ENCODE measurements at regions of chr16 and their contacts with region 1.

Region 1: GRCh38 chr16:8621572-8622314 is at the start of gene METTL22:
- DNase-seq: peak; percentile 90 to 96 (median 92)
- ATAC-seq: peak; percentile 97 to 99 (median 98)
- H3K4me3 ChIP-seq: peak within 1 kb of the TSS; percentile 81 to 100 (median 96)
- H3K27ac ChIP-seq: peak within 1 kb of the TSS; percentile 62 to 92 (median 84)
- H3K4me1 ChIP-seq: peaks cover 0 to 22% (median 16%) of the 10 kb centered on the region in 12 donors
- H3K27me3 ChIP-seq: no peaks in the 10 kb centered on the region
- CTCF ChIP-seq: peak in 2 of 12 donors; percentile 9 to 10
- POLR2A ChIP-seq: peak in 1 of 2 donors; percentile 85
- total RNA-seq, gene METTL22: 15.3 to 80.3 (median 33.0) TPM

Region 2: DNA sequence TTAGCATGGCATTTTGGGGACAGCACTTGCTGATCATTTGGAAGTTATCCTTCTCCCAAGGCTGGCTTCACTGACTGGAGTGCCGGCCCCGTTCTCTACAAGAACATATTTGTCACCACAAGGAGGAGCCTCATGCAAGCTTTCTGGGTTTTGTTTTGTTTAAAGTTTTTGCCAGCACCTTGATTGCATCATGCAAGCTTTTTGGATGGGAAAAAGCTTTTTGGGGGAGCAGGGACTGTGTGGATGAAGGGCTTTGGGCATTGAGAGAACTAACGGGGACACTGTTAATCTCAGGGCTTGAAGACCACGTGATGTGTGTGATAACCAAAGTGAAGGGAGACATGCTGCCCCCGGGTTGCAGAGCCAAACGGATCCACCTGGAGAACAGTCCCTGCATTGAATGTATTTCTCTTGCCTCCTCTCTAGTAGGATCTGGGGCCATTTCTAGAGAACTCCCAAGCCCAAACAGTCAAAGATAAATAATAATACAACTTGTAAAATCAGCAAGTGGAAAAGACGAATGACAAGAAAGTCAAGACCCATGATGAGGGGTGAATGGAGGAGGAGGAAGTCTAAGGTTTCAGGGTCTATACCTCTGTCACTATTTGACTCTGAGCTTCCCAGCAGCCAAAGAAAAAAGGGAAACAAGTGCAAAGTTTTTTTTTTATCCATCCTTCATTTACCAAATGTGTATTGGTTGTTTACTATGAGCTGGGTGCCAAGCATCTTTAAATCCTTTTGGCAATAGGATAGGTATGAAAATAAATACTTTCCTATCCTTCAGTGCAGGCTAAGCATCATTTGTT is 48.6 kb before region 1 on chr16:
- intact Hi-C with region 1: loop called in 2 of 10 experiments (anchors 5 kb)
- DNase-seq: no peak
- ATAC-seq: no peak
- H3K4me3 ChIP-seq: no peak overlapping the region
- H3K27ac ChIP-seq: no peak overlapping the region
- H3K4me1 ChIP-seq: peaks cover 0 to 8% (median 0%) of the 10 kb centered on the region in 12 donors
- H3K27me3 ChIP-seq: peaks cover 0 to 20% (median 8%) of the 10 kb centered on the region in 9 donors
- CTCF ChIP-seq: peak in 10 of 12 donors; percentile 7 to 48 (median 34)
- POLR2A ChIP-seq: no peak

Region 3: DNA sequence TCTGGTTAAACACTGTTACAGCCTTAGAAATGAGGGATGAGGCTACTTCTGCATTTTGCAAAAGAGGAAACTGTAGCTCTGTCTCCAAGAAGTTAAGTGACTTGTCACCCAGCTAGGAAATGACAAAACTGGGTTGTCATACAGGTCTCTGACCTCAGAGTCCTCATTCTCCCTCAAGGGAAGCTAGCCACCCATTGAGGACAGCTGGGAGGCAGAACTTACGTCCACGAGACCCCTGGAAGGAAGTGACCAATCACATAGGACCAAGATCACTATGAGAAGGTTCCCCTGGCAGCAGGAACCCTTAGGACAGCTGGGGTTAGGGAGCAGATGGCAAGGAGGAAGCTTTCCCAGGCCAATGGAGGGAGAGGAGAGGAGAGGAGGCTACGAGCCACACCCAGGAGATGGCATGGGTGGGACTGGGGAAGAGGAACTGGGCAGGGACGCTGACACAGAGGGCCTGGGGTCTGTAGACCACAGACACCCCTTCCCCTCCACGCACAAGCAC is 11.0 kb after region 1 on chr16:
- intact Hi-C with region 1: loop called in 1 of 10 experiments (anchors 1 kb)
- DNase-seq: peak in 4 of 5 donors; percentile 30 to 63 (median 42)
- ATAC-seq: peak; percentile 51 to 89 (median 74)
- H3K4me3 ChIP-seq: no peak overlapping the region
- H3K27ac ChIP-seq: peak overlapping the region in 7 of 12 donors; percentile 13 to 94 (median 59)
- H3K4me1 ChIP-seq: peaks cover 0 to 22% (median 0%) of the 10 kb centered on the region in 12 donors
- H3K27me3 ChIP-seq: no peaks in the 10 kb centered on the region
- CTCF ChIP-seq: no peak
- POLR2A ChIP-seq: no peak

Region 4: DNA sequence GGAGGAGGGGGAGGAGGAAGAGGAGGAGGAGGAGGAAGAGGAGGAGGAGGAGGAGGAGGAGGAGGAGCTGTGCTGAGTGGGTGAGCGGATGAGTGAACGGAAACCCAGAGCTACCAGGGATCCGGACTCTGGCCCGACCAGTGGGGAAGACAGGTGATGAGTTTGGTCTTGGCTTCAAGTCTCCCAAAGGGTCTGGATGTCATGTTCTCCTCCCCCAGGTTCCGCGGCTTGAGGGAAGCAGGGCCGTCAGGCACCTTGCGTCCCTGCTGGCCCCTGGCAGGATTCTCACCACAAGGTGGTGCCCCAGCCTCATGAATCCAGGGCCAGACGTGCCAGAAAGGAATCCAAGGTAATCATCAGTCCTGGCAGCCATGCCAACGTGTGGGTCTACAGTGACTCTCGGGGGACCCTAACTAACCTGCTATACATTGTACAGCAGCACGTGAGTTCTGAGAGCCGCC is 39.1 kb after region 1 on chr16:
- intact Hi-C with region 1: no loop called
- DNase-seq: peak in 4 of 5 donors; percentile 25 to 66 (median 45)
- ATAC-seq: peak in 3 of 4 donors; percentile 85 to 89 (median 87)
- H3K4me3 ChIP-seq: no peak overlapping the region
- H3K27ac ChIP-seq: no peak overlapping the region
- H3K4me1 ChIP-seq: no peaks in the 10 kb centered on the region
- H3K27me3 ChIP-seq: no peaks in the 10 kb centered on the region
- CTCF ChIP-seq: peak; percentile 38 to 69 (median 59)
- POLR2A ChIP-seq: no peak

Region 5: DNA sequence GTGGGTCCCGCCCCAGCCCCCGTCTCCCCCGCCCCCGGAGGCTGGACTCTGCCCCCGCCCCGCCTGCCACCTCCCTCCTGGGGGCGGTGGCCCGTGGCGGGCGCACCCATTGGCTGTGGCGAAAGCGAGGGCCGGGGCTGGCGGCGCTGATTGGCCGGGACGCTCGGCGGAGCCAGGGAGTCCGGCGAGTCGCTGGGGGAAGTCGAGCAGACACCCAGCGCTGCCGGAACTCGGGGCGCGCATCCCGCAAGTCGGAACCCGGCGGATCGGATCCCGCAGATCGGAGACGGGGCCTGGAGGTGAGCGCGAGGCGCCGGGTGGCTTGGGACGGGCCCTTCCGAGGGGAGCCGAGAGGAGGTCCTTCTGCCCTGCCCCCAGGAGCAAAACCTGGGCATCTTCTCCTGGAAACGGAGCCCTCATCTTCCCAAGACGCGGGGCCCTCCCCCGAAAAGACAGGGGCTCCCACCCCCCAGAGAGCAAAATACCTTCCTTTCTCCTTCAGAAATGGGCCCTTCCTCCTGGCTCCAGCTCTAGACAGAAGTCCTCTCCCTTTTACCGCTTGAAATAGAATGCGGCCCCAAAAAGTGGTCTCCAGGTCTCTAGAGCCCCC is 52.8 kb after region 1 on chr16 and contains the start of gene ABAT:
- intact Hi-C with region 1: loop called in 1 of 10 experiments (anchors 5 kb)
- DNase-seq: peak; percentile 90 to 95 (median 91)
- ATAC-seq: peak; percentile 98 to 100 (median 100)
- H3K4me3 ChIP-seq: peak within 1 kb of the TSS; percentile 41 to 91 (median 70)
- H3K27ac ChIP-seq: peak within 1 kb of the TSS in 4 of 12 donors; percentile 29 to 52 (median 44)
- H3K4me1 ChIP-seq: peaks cover 0 to 17% (median 8%) of the 10 kb centered on the region in 12 donors
- H3K27me3 ChIP-seq: no peaks in the 10 kb centered on the region
- CTCF ChIP-seq: no peak
- POLR2A ChIP-seq: peak in 1 of 2 donors; percentile 51
- total RNA-seq, gene ABAT: 5.1 to 37.0 (median 12.8) TPM

Region 6: GRCh38 chr16:8963825-8964441 is 342.2 kb after region 1 on chr16 and contains the start of gene USP7:
- intact Hi-C with region 1: loop called in 1 of 10 experiments (anchors 5 kb)
- DNase-seq: peak; percentile 94 to 97 (median 95)
- ATAC-seq: peak; percentile 85 to 97 (median 96)
- H3K4me3 ChIP-seq: peak within 1 kb of the TSS; percentile 63 to 95 (median 80)
- H3K27ac ChIP-seq: peak within 1 kb of the TSS; percentile 33 to 93 (median 82)
- H3K4me1 ChIP-seq: peaks cover 0 to 49% (median 37%) of the 10 kb centered on the region in 12 donors
- H3K27me3 ChIP-seq: no peaks in the 10 kb centered on the region
- CTCF ChIP-seq: no peak
- POLR2A ChIP-seq: no peak
- total RNA-seq, gene USP7: 49.5 to 86.5 (median 68.1) TPM